ENCODE measurements at regions of chr3 and their contacts with region 1.

Region 1: DNA sequence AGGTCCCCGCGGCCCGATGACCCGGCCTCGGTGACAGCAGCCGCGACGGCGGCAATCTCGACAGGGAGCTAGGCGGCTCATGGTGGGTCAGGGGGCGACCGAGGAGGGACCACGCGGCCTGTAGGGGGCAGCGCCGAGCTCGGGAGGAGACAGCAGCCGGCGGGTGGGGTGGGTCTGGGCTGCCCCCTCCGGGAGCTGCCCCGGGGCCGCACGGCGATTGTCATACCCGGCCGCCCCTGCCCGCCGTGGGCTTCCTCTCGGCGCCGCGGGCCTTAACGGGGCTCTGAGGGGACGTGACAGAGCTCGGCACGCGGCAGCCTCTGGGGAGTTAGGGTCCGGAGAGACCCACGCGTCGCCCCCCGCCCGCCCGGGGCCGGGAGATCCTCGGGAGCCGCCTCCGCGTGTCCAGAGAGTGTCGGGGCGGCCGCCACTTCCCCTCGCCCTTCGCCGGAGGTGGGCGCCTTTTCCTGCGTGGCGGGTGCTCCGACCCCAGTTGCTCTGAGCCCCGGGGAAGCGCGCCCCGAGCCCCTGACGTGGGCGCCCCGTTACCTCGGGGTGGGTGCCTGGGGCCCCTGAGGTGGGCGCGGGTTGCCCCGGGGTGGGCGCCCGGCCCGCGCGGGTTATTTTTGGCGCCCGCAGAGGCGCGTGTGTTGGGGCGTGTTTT is 539 bp upstream of the PLCL2 start:
- DNase-seq: peak; percentile 46 to 82 (median 73)
- ATAC-seq: peak; percentile 49
- H3K4me3 ChIP-seq: peak overlapping the region; percentile 56 to 93
- H3K4me3 Mint-ChIP-seq: peak overlapping the region; percentile 95
- H3K27ac ChIP-seq: peak overlapping the region; percentile 62 to 70
- H3K27ac Mint-ChIP-seq: peak overlapping the region; percentile 97
- H3K4me1 ChIP-seq: peaks cover 16% of the 10 kb centered on the region
- H3K4me1 Mint-ChIP-seq: peaks cover 33% of the 10 kb centered on the region
- H3K27me3 ChIP-seq: no peaks in the 10 kb centered on the region
- H3K27me3 Mint-ChIP-seq: no peaks in the 10 kb centered on the region
- CTCF ChIP-seq: peak; percentile 24

Region 2: GRCh38 chr3:16704941-16705340 is 179.3 kb before region 1 on chr3:
- CTCF ChIA-PET with region 1: no interaction called
- POLR2A ChIA-PET with region 1: no interaction called
- intact Hi-C with region 1: no loop called
- DNase-seq: no peak
- ATAC-seq: no peak
- H3K4me3 ChIP-seq: no peak overlapping the region
- H3K4me3 Mint-ChIP-seq: no peak overlapping the region
- H3K27ac ChIP-seq: no peak overlapping the region
- H3K27ac Mint-ChIP-seq: no peak overlapping the region
- H3K4me1 ChIP-seq: no peaks in the 10 kb centered on the region
- H3K4me1 Mint-ChIP-seq: no peaks in the 10 kb centered on the region
- H3K27me3 ChIP-seq: no peaks in the 10 kb centered on the region
- H3K27me3 Mint-ChIP-seq: no peaks in the 10 kb centered on the region
- CTCF ChIP-seq: no peak

Region 3: GRCh38 chr3:16849229-16849628 is 35.0 kb before region 1 on chr3:
- CTCF ChIA-PET with region 1: interaction called, 22 read pairs
- POLR2A ChIA-PET with region 1: interaction called, 37 read pairs
- intact Hi-C with region 1: loop called in 1 of 2 experiments (anchors 1 kb)
- DNase-seq: peak; percentile 42 to 88 (median 73)
- ATAC-seq: peak; percentile 84
- H3K4me3 ChIP-seq: peak overlapping the region; percentile 10 to 11
- H3K4me3 Mint-ChIP-seq: peak overlapping the region; percentile 53
- H3K27ac ChIP-seq: peak overlapping the region in 1 of 2 experiments; percentile 56
- H3K27ac Mint-ChIP-seq: no peak overlapping the region
- H3K4me1 ChIP-seq: peaks cover 38% of the 10 kb centered on the region
- H3K4me1 Mint-ChIP-seq: peaks cover 48% of the 10 kb centered on the region
- H3K27me3 ChIP-seq: no peaks in the 10 kb centered on the region
- H3K27me3 Mint-ChIP-seq: no peaks in the 10 kb centered on the region
- CTCF ChIP-seq: no peak

Region 4: DNA sequence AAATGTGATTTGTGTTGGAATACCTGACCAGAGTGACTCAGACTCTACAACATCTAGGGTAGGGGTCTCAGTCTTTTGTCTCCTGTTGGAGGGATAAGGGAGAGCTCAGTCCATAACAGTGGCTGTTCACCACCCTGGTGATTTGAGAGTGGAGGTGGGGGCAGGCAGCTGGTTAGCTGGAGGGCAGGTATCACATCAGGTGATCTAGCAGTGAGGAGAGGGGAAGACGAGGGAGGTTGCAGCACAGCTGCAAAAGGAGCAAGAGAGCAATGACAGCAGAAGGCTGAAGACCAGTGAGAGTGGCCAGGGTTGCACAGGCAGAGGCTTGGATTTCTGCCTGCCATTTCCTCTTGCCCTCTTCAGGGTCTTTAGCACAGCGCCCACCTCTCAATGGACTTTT is 38.9 kb after region 1 on chr3:
- CTCF ChIA-PET with region 1: interaction called, 3 read pairs
- POLR2A ChIA-PET with region 1: no interaction called
- intact Hi-C with region 1: loop called in 1 of 2 experiments (anchors 5 kb)
- DNase-seq: no peak
- ATAC-seq: no peak
- H3K4me3 ChIP-seq: no peak overlapping the region
- H3K4me3 Mint-ChIP-seq: no peak overlapping the region
- H3K27ac ChIP-seq: no peak overlapping the region
- H3K27ac Mint-ChIP-seq: peak overlapping the region; percentile 50
- H3K4me1 ChIP-seq: peaks cover 35% of the 10 kb centered on the region
- H3K4me1 Mint-ChIP-seq: peaks cover 70% of the 10 kb centered on the region
- H3K27me3 ChIP-seq: no peaks in the 10 kb centered on the region
- H3K27me3 Mint-ChIP-seq: no peaks in the 10 kb centered on the region
- CTCF ChIP-seq: no peak

Region 5: DNA sequence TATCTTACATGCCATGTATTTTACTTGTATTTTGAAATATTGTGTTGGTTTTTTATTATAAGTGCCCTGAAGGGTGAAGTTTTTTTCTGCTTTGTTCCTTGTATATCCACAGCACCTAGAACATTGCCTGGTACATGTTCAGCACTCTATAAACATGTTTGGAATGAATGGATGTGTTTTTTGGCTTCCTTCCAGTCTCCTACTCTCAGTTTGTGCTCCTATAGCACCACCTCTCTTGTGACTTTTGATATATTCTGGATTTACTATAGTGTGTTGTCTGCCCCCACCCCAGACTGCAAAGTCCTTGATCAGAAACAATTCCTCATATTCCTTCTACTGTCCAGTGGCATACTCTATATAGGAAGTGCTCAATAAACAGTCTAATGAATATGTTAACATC is 61.1 kb after region 1 on chr3:
- CTCF ChIA-PET with region 1: no interaction called
- POLR2A ChIA-PET with region 1: no interaction called
- intact Hi-C with region 1: loop called in 1 of 2 experiments (anchors 5 kb)
- DNase-seq: peak in 1 of 9 experiments; percentile 17
- ATAC-seq: no peak
- H3K4me3 ChIP-seq: no peak overlapping the region
- H3K4me3 Mint-ChIP-seq: no peak overlapping the region
- H3K27ac ChIP-seq: no peak overlapping the region
- H3K27ac Mint-ChIP-seq: no peak overlapping the region
- H3K4me1 ChIP-seq: peaks cover 32% of the 10 kb centered on the region
- H3K4me1 Mint-ChIP-seq: peaks cover 77% of the 10 kb centered on the region
- H3K27me3 ChIP-seq: no peaks in the 10 kb centered on the region
- H3K27me3 Mint-ChIP-seq: no peaks in the 10 kb centered on the region
- CTCF ChIP-seq: no peak

Region 6: DNA sequence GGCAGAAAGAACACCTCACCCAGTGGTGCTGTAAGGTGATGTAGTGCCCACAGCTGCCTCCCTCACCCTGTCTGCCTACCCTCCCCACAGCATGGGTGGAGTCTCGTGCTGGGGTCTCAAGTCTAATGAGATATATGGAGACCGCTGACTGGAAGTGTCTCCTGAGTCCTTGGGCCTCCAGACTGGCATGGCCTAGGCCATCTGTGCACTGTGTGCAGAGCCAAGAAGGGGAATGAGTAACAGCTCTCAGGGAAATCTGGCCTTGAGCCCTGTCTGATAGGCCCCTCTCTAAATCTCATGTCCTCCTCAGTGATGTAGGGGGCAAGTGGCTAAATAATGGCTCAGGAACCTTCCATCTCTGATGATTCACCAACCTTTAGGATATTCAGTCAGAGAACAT is 277.9 kb after region 1 on chr3:
- CTCF ChIA-PET with region 1: no interaction called
- POLR2A ChIA-PET with region 1: no interaction called
- intact Hi-C with region 1: loop called in 1 of 2 experiments (anchors 5 kb)
- DNase-seq: no peak
- ATAC-seq: no peak
- H3K4me3 ChIP-seq: no peak overlapping the region
- H3K4me3 Mint-ChIP-seq: no peak overlapping the region
- H3K27ac ChIP-seq: no peak overlapping the region
- H3K27ac Mint-ChIP-seq: no peak overlapping the region
- H3K4me1 ChIP-seq: peaks cover 8% of the 10 kb centered on the region
- H3K4me1 Mint-ChIP-seq: peaks cover 10% of the 10 kb centered on the region
- H3K27me3 ChIP-seq: no peaks in the 10 kb centered on the region
- H3K27me3 Mint-ChIP-seq: no peaks in the 10 kb centered on the region
- CTCF ChIP-seq: no peak

Region 7: GRCh38 chr3:18444595-18445400 is 1560.6 kb after region 1 on chr3:
- CTCF ChIA-PET with region 1: no interaction called
- POLR2A ChIA-PET with region 1: no interaction called
- intact Hi-C with region 1: loop called in 1 of 2 experiments (anchors 5 kb)
- DNase-seq: peak; percentile 53 to 91 (median 78)
- ATAC-seq: peak; percentile 61
- H3K4me3 ChIP-seq: peak overlapping the region; percentile 81 to 91
- H3K4me3 Mint-ChIP-seq: peak overlapping the region; percentile 92
- H3K27ac ChIP-seq: peak overlapping the region; percentile 76 to 90
- H3K27ac Mint-ChIP-seq: peak overlapping the region; percentile 97
- H3K4me1 ChIP-seq: peaks cover 4% of the 10 kb centered on the region
- H3K4me1 Mint-ChIP-seq: peaks cover 48% of the 10 kb centered on the region
- H3K27me3 ChIP-seq: no peaks in the 10 kb centered on the region
- H3K27me3 Mint-ChIP-seq: no peaks in the 10 kb centered on the region
- CTCF ChIP-seq: no peak

Measured in CD8-positive, alpha-beta T cell (primary cell).